Esophagus muscularis mucosa (tissue), 4 donors: ENCODE measurements at regions of chr6 and their contacts with region 1.

Region 1: GRCh38 chr6:5143634-5144311 is 58.6 kb downstream of the PPP1R3G start:
- DNase-seq: peak; percentile 93
- H3K4me3 ChIP-seq: no peak overlapping the region
- H3K27ac ChIP-seq: no peak overlapping the region
- H3K4me1 ChIP-seq: peaks cover 0 to 8% (median 8%) of the 10 kb centered on the region in 4 donors
- H3K27me3 ChIP-seq: no peaks in the 10 kb centered on the region
- CTCF ChIP-seq: peak; percentile 87 to 95 (median 92)
- EP300 ChIP-seq: no peak
- POLR2A ChIP-seq: no peak

Region 2: GRCh38 chr6:5025911-5026819 is 117.6 kb before region 1 on chr6:
- intact Hi-C with region 1: no loop called
- DNase-seq: peak; percentile 91
- H3K4me3 ChIP-seq: peak overlapping the region; percentile 61 to 66 (median 64)
- H3K27ac ChIP-seq: peak overlapping the region; percentile 87 to 92 (median 88)
- H3K4me1 ChIP-seq: peaks cover 8 to 34% (median 16%) of the 10 kb centered on the region in 4 donors
- H3K27me3 ChIP-seq: no peaks in the 10 kb centered on the region
- CTCF ChIP-seq: peak; percentile 9 to 27 (median 20)
- EP300 ChIP-seq: no peak
- POLR2A ChIP-seq: no peak

Region 3: DNA sequence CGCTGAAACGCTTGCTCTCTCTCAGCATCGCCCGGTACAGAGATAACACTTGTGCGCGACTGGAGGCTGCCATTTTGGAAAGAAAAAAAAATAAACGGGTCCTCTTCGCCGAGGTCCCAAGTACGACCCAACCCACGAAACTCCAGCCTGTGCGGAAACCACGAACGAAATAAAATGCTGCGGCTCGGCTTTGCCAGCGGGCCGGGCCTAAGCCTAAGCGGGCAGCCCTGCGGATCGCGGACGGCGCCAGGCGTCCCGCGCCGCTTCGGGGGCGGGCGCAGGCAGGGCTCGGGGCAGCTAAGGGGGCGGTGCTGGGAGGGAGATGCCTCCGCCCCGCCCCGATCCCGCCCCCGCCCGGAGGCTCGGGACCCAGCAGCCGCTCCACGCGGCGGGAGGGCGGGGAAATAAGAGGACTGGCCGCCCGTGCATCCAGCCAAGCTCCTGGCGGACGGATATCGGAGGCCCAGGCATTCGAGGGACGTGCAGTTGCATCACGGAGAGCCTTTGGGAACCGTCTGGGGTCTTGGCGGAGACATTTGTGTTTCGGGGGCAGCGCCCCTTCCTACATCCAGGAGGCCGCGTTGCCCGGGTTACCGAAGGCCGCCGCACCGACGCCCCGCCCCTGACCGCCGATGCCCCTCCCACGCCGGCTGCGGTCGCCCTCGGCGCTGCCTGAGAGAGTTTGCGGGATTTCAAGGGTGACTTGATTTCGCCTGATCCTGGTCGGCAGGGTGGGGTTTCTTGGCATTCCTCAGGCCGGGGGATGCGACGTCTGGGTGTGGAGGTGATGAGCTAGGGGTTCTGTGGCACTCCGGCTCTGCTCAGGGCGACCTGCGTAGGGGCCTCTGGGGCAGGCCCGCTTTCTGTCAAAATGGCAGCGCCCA is 117.1 kb after region 1 on chr6 and contains the starts of genes FARS2 and LYRM4:
- intact Hi-C with region 1: loop called (anchors 5 kb)
- DNase-seq: peak; percentile 97
- H3K4me3 ChIP-seq: peak within 1 kb of the TSS; percentile 72 to 82 (median 75)
- H3K27ac ChIP-seq: peak within 1 kb of the TSS; percentile 89 to 94 (median 92)
- H3K4me1 ChIP-seq: peaks cover 17 to 26% (median 24%) of the 10 kb centered on the region in 4 donors
- H3K27me3 ChIP-seq: no peaks in the 10 kb centered on the region
- CTCF ChIP-seq: peak in 1 of 3 experiments; percentile 49
- EP300 ChIP-seq: no peak
- POLR2A ChIP-seq: no peak
- total RNA-seq, gene FARS2: 10.6 to 24.9 (median 15.2) TPM
- total RNA-seq, gene LYRM4: 16.9 to 20.9 (median 18.4) TPM

Region 4: DNA sequence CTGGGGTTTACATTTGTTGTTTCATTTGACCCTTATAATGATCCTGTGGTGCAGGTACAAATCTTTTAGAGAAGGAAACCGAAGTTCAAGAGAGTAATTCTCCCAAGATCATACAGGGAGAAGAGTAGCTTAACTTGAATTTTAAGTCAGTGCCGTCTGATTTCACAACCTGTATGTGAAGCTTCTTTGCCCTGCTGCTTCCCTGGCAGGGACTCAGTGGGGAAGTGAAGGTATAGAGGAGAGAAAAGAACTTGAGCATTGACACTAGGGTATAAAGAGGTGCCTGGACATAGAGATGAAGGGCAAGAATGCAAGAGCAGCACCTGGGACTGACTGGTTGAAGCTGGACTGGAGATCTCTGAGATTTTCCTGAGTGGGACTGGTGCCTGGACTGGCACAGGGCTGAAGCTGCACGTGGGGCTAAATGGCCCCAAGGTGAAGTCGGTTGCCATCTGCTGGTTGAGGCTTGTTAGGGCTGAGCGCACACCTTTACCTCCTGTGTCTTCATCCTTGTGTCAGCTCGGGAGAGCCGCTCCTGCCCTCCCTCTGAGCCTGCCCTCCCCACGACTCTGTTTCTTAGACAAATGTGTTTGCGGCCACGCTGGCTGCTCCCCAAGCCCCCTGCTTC is 159.3 kb after region 1 on chr6:
- intact Hi-C with region 1: loop called (anchors 5 kb)
- DNase-seq: peak; percentile 55
- H3K4me3 ChIP-seq: no peak overlapping the region
- H3K27ac ChIP-seq: no peak overlapping the region
- H3K4me1 ChIP-seq: peaks cover 4 to 17% (median 10%) of the 10 kb centered on the region in 4 donors
- H3K27me3 ChIP-seq: no peaks in the 10 kb centered on the region
- CTCF ChIP-seq: peak; percentile 42 to 45 (median 44)
- EP300 ChIP-seq: no peak
- POLR2A ChIP-seq: no peak

Region 5: GRCh38 chr6:5398530-5398929 is 254.8 kb after region 1 on chr6:
- intact Hi-C with region 1: loop called (anchors 2 kb)
- DNase-seq: no peak
- H3K4me3 ChIP-seq: no peak overlapping the region
- H3K27ac ChIP-seq: no peak overlapping the region
- H3K4me1 ChIP-seq: no peaks in the 10 kb centered on the region
- H3K27me3 ChIP-seq: no peaks in the 10 kb centered on the region
- CTCF ChIP-seq: peak; percentile 22 to 49 (median 22)
- EP300 ChIP-seq: no peak
- POLR2A ChIP-seq: no peak

Region 6: DNA sequence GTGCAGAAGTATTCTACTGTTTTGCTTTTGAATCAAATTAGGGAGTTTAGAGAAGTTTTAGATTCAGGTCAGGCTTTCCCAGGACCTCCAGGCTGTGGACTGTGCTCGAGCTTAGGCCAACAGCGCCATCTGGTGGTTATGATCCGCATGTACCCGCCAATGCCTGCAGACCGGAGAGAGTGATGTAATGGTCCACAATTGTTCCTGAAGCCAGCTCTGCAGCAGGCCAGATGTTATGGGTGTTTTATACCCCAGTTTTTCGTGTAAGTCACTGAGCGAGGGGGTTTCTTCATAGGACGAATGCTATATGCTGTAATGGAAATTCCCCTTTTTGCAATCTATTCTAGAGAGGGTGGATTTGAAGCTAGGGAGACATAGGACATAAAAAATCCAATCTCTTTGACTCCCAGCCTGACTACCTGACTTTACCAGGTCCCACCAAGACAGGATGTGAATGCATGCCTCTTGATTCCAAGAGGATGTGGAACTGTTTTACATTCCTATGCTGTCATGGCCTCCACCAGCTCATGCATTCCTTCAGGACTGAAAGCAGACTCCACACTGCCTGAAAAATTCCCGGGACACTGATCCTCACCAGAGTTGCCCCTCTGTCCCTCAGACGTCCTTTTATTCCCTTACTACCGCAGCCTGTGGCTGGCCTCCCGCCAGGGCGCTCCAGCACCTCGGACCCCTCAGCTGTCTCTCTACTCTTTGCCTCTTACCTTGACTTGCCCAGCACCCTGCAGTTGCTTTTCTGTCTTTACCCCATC is 1403.5 kb after region 1 on chr6:
- intact Hi-C with region 1: loop called (anchors 10 kb)
- DNase-seq: peak; percentile 97
- H3K4me3 ChIP-seq: peak overlapping the region; percentile 44 to 60 (median 49)
- H3K27ac ChIP-seq: no peak overlapping the region
- H3K4me1 ChIP-seq: peaks cover 13 to 15% (median 15%) of the 10 kb centered on the region in 4 donors
- H3K27me3 ChIP-seq: peaks cover 0 to 68% (median 4%) of the 10 kb centered on the region in 4 donors
- CTCF ChIP-seq: peak; percentile 71 to 90 (median 85)
- EP300 ChIP-seq: no peak
- POLR2A ChIP-seq: no peak